ENCODE measurements at regions of chr11 and their contacts with region 1.

Region 1: GRCh38 chr11:4496557-4497275 is 14.3 kb downstream of the OR52K1 start:
- DNase-seq: no peak
- H3K4me3 ChIP-seq: no peak overlapping the region
- CTCF ChIP-seq: no peak

Region 2: DNA sequence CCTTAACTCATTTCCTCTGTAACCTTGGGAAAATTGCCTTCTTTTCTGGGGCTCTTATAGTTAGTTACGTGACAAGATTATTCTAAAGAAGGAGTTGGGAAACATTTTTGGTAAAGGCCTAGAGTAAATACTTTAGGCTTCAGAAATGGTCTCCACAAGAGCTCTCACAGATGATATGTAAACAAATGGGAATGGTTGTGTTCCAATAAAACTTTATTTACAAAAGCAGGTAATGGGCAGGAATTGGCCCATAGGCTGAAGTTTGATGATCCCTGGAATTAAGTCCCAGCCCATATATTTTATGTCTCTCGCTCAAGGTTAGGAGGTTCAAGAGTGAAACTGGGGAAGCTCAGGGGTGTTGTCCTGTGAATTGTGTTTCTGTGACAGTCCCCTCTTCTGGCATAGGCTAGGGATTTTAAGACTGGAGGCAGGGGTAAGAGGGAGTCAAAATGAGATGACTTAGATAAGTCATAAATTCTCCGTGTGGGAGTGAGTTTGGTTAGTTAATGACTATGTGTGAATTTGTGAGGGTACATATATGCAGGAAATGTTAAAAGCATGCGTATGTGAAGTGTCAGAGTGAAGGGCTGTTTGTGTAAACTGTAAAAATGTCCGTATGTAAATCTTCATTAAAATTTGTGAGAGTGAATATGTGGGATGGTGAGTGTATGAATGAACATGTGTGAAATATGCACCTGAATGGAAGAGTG is 121.1 kb before region 1 on chr11:
- CTCF ChIA-PET with region 1: no interaction called
- POLR2A ChIA-PET with region 1: no interaction called
- DNase-seq: no peak
- H3K4me3 ChIP-seq: no peak overlapping the region
- CTCF ChIP-seq: no peak

Region 3: DNA sequence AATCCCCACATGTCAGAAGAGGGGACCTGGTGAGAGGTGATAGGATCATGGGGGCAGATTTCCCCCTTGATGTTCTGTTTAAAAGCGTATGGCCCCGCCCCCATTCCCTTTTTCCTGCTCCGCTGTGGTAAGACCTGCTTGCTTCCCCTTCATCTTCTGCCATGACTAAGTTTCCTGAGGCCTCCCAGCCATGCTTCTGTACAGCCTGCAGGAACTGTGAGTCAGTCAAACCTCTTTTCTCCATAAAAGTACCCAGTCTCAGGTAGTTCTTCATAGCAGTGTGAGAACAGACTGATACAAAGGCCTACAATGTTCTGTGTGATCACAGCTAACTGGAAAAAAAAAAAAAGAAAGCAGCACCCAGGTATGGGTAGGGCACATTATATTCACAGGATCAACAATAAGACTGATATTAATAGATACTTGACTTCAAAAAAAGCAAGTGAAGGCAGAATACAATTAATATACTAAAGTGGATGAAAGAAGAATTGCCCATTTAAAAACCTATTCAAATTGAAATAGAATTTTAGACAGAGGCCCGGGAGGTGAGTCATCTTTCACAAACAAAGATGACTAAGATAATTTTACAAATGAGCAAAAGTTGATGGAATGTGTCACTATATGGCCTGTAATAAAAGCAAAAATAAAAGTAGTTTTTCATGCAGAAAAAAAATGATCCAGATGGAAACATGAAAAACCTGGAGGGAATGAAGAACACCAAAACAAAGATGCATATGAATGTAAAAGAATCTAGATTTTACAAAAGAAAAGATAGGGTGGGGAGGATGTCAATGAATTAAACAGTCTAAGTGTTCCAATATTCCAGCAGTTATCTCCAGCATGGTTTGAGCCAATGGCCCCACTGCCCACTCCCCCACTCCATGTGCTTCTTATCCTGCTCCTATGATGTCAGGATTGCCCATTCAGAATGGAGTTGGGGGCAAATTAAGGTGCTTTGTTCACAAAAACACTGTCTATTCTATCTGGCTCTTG is 15.8 kb before region 1 on chr11:
- CTCF ChIA-PET with region 1: interaction called, 14 read pairs
- POLR2A ChIA-PET with region 1: no interaction called
- DNase-seq: no peak
- H3K4me3 ChIP-seq: no peak overlapping the region
- CTCF ChIP-seq: no peak